PC-3 (cell line): ENCODE measurements at regions of chr21 and their contacts with region 1.

Region 1: DNA sequence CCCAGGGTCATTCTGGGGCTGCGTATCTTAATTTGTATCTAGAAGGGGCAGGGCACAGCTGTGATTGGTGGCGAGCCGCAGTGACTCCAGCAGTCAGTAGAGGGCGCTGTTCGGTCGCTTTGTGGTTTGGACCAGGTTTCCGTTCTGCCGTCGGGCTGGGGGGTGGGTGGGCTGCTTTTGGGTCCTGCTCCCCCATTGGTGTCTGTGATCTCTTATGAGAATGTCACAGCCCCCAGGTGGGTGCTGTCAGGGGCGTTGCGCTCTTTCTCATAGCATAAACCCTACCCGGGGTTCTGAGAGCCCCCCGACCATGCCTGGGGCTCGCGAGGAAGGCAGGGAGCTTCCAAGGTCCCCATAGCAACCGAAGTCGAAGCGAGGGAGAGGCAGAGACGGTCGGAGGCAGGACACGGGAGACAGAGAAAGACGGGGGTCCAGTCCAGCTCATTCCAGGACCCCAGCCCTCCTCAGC is 5.4 kb downstream of the TFF3 start:
- DNase-seq: peak; percentile 64
- ATAC-seq: peak; percentile 74
- H3K4me3 ChIP-seq: no peak overlapping the region
- H3K27ac ChIP-seq: no peak overlapping the region
- H3K4me1 ChIP-seq: peaks cover 6% of the 10 kb centered on the region; the same call in 1 of the 2 replicates
- H3K27me3 ChIP-seq: no peaks in the 10 kb centered on the region
- CTCF ChIP-seq: peak; percentile 86

Region 2: GRCh38 chr21:41993744-41994143 is 316.0 kb before region 1 on chr21:
- CTCF ChIA-PET with region 1: no interaction called
- POLR2A ChIA-PET with region 1: no interaction called
- intact Hi-C with region 1: no loop called
- DNase-seq: peak; percentile 59
- ATAC-seq: peak; percentile 81
- H3K4me3 ChIP-seq: no peak overlapping the region
- H3K27ac ChIP-seq: peak overlapping the region; percentile 22; the same call in 1 of the 2 replicates
- H3K4me1 ChIP-seq: peaks cover 11% of the 10 kb centered on the region
- H3K27me3 ChIP-seq: no peaks in the 10 kb centered on the region
- CTCF ChIP-seq: no peak

Region 3: GRCh38 chr21:42145569-42146272 is 164.1 kb before region 1 on chr21:
- CTCF ChIA-PET with region 1: no interaction called
- POLR2A ChIA-PET with region 1: no interaction called
- intact Hi-C with region 1: loop called (anchors 5 kb)
- DNase-seq: peak; percentile 77
- ATAC-seq: peak; percentile 92
- H3K4me3 ChIP-seq: no peak overlapping the region
- H3K27ac ChIP-seq: no peak overlapping the region
- H3K4me1 ChIP-seq: no peaks in the 10 kb centered on the region
- H3K27me3 ChIP-seq: no peaks in the 10 kb centered on the region
- CTCF ChIP-seq: peak; percentile 95

Region 4: DNA sequence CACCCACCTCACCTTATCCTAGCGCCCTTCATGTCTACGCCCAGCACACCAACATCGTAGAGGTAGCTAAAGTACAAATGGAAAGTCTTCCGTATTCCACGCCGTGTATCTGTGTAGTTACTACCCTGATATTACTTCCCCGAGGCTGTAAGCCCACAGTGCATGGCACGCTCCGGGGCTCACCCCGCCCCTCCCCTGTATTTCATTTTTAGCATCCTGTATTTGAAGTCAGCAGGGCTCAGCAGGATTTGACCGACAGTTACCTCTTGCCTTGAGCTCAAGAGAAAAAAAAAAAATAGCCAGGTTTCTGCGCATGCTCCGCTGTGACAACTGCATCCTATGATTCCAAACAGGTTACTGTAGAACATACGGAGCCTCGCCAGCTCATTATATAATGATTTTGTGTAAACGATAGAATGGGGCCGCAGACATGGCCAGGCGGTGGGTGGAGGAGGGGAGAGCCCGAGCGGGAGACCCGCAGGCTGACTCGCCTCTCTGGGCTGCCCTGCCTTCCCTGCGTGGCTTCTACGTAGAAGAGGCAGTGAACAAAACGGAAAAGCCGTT is 89.6 kb before region 1 on chr21:
- CTCF ChIA-PET with region 1: interaction called, 18 read pairs
- POLR2A ChIA-PET with region 1: no interaction called
- intact Hi-C with region 1: no loop called
- DNase-seq: peak; percentile 84
- ATAC-seq: peak; percentile 39
- H3K4me3 ChIP-seq: peak overlapping the region; percentile 66
- H3K27ac ChIP-seq: no peak overlapping the region
- H3K4me1 ChIP-seq: peaks cover 2% of the 10 kb centered on the region; the same call in 1 of the 2 replicates
- H3K27me3 ChIP-seq: no peaks in the 10 kb centered on the region
- CTCF ChIP-seq: no peak

Region 5: DNA sequence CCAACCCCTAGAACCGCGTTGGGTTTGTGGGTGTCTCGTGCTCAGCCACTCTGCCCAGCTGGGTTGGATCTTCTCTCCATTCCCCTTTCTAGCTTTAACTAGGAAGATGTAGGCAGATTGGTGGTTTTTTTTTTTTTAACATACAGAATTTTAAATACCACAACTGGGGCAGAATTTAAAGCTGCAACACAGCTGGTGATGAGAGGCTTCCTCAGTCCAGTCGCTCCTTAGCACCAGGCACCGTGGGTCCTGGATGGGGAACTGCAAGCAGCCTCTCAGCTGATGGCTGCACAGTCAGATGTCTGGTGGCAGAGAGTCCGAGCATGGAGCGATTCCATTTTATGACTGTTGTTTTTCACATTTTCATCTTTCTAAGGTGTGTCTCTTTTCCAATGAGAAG is 13.3 kb before region 1 on chr21:
- CTCF ChIA-PET with region 1: interaction called, 13 read pairs
- POLR2A ChIA-PET with region 1: no interaction called
- intact Hi-C with region 1: no loop called
- DNase-seq: no peak
- ATAC-seq: no peak
- H3K4me3 ChIP-seq: no peak overlapping the region
- H3K27ac ChIP-seq: no peak overlapping the region
- H3K4me1 ChIP-seq: no peaks in the 10 kb centered on the region
- H3K27me3 ChIP-seq: no peaks in the 10 kb centered on the region; the same call in 1 of the 2 replicates
- CTCF ChIP-seq: no peak

Region 6: GRCh38 chr21:42366321-42367009 is 56.7 kb after region 1 on chr21 and contains the start of gene TFF1:
- CTCF ChIA-PET with region 1: interaction called, 15 read pairs
- POLR2A ChIA-PET with region 1: no interaction called
- intact Hi-C with region 1: loop called (anchors 5 kb)
- DNase-seq: peak; percentile 95
- ATAC-seq: peak; percentile 93
- H3K4me3 ChIP-seq: no peak within 1 kb of the TSS
- H3K27ac ChIP-seq: peak within 1 kb of the TSS; percentile 97
- H3K4me1 ChIP-seq: peaks cover 56% of the 10 kb centered on the region
- H3K27me3 ChIP-seq: no peaks in the 10 kb centered on the region
- CTCF ChIP-seq: no peak
- total RNA-seq, gene TFF1: 99.2 and 111 TPM in 2 replicates

Region 7: DNA sequence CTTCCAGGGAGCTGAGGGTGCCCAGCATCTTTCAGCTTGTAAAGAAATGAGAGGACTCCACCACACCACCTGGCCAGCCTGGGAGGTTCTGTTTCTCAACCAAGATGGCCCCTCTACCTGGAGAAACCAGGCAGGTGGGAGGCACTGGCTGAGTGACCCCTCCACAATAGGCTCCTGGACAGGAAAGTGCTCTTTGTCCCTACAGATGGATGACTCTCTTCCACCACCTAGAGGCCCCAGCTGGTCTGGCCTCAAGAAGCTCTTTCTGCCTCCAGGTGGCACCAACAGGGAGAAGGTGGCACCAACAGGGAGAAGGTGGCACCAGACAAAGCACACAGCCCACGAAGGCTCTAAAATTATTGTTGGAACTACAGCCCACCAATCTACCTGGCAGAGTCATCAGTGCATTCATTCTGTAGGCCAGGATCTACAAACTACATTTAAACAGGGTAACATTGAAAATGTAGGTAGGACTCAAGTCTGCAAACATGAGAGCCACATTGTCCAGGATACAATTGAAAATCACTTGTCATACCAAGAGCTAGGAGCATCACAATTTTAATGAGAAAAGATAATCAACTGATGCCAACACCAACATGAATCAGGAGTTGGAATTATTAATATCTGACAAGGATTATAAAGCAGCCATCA is 71.7 kb after region 1 on chr21:
- CTCF ChIA-PET with region 1: interaction called, 18 read pairs
- POLR2A ChIA-PET with region 1: no interaction called
- intact Hi-C with region 1: loop called (anchors 1 kb)
- DNase-seq: peak; percentile 77
- ATAC-seq: peak; percentile 79
- H3K4me3 ChIP-seq: no peak overlapping the region
- H3K27ac ChIP-seq: peak overlapping the region; percentile 10; the same call in 1 of the 2 replicates
- H3K4me1 ChIP-seq: peaks cover 13% of the 10 kb centered on the region
- H3K27me3 ChIP-seq: no peaks in the 10 kb centered on the region
- CTCF ChIP-seq: peak; percentile 98

Region 8: DNA sequence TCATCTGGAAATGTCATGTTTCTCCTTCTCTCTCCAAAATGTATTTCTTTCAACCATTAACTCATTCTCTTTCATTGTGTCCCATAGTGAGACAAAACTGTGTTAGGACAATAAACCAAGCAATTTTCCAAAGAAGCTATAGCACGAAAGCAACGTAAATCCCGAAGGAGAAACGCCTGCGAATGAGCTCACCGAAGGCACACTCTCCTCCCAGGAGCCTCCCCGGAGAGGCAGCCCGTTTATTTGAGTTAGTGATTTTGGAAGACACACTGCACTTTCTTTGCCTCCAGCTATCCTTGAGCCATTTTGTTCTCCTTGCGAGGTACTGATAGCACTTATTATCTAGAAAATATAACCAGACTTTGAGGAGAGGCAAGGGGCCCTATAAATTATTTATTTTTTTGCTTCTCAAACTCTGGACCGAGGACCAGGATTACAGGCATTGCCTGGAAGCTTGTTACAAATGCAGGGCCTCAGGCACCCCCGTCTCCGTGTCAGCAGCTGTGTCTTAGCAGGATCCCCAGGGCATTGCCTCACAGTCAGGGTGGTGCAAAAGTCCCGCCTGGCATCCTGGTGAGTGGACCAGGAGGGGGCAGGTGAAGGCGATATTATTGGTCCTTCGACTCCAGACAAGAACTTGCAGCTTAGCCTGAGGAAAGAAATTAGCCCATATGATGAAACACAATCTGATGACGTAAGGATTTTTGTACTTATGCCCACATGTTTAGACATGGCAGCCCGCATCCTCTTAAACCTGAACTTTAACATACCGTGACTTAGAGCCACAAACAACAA is 145.2 kb after region 1 on chr21:
- CTCF ChIA-PET with region 1: interaction called, 3 read pairs
- POLR2A ChIA-PET with region 1: no interaction called
- intact Hi-C with region 1: loop called (anchors 1 kb)
- DNase-seq: no peak
- ATAC-seq: no peak
- H3K4me3 ChIP-seq: no peak overlapping the region
- H3K27ac ChIP-seq: no peak overlapping the region
- H3K4me1 ChIP-seq: no peaks in the 10 kb centered on the region; the same call in 1 of the 2 replicates
- H3K27me3 ChIP-seq: no peaks in the 10 kb centered on the region
- CTCF ChIP-seq: no peak